Cardiac septum (tissue), 1 donor: ENCODE measurements at regions of chr13 and their contacts with region 1.

Region 1: DNA sequence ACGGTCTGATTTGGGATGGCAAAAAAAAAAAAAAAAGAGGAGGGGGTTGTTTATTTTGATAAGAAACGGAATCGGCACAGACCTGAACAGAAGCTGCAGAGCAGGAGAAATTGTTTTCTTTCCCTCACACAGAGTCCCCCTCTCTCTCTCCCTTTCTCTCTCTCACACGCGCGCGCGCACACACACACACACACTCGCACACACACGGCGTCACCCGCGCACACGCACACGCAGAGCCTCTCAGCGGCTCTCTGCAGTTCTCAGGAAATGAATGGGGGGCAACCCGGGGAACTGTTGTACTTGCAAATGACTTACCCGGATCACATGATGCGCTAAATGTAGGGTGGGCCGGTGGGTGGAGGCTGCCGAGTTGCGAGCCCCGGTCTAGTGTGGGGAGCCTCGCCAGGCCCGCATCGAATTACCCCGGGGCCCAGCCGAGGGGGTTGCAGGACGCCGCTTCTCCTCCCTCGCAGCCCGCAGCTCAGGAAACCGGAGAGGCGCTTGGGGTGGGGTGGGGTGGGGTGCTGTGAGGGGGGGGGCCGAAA is 475 bp downstream of the KLF12 start:
- DNase-seq: peak; percentile 85

Region 2: GRCh38 chr13:73765651-73766384 is 367.9 kb before region 1 on chr13:
- intact Hi-C with region 1: loop called (anchors 5 kb)
- DNase-seq: peak; percentile 85

Region 3: GRCh38 chr13:73943137-73943964 is 190.4 kb before region 1 on chr13:
- intact Hi-C with region 1: loop called (anchors 10 kb)
- DNase-seq: no peak

Region 4: DNA sequence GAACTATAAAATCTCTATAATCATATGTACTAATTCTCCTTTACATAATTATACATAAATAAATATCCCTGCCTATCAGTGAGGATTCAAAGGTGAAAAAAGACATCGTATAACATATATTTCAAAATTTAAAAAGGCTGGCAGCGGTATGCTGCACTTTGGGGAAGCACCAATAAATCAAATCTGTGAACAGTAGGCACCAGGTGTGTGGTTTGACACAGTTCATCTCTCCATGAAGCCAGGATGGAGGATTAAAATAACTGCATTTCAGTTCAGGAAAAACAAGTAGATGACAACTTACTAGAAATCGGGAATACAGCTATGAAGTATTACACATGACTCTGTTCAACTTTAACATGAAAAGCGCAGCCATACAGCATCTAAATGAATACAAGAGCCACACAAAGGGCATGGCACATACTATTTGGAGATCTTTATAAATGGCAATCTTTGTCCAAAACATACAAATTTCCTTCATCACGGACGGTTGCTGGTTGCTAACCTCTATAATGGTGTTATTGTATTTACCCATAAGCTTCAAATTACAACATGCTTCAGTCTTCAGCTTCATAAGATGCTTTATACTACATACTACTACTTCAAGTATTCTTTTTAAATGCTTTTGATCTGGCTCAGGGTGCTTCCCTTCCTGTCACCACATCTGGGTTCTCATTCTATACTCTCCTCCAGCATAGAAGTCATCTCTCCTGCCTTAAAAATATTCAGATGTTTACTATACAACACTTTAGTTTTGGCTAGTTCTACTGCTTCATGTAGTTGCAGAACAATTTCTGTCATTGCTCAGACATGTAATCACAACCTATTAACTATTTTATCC is 128.2 kb before region 1 on chr13:
- intact Hi-C with region 1: no loop called
- DNase-seq: no peak

Region 5: DNA sequence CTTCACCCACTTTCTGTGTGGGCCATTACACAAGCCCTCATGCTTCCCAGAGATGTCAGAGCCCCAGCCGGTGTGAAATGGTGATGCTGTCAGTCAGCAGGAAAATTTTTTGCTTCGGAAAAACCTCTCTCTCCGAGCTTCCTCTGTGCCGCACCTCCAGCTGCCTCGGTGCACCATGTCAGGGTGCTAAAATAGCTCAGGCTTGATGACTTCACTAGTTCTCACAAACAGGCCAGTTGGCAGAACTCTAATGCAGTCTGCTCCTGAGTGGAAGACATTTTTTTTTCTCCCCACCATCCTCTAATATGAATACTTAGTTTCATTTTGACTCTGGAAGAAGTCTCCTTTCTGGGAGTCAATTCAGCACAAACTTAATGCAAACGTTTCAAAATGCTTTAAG is 70.8 kb before region 1 on chr13:
- intact Hi-C with region 1: loop called (anchors 2 kb)
- DNase-seq: peak; percentile 80

Region 6: DNA sequence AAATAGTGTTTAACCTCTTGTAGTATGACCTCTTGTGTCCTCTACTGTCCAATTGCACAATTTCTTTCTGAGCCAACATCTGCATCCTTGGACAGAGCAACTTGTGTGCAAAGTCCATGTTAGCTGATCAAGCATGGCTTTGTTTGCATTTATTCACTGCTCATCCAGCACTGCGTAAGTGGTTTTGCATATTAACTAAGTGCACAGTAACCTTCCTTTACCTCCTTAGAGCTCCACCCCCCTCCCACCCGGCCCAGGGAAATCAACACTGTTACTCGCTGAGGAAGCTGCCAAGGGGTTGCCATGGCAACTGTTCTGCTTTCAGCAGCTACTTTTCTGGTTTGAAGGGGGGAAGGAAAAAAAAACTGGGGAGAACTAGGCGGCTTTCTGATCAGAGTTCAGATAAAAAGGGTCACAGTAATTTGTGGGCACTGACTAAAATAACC is 154.0 kb after region 1 on chr13:
- intact Hi-C with region 1: loop called (anchors 5 kb)
- DNase-seq: peak; percentile 77